ENCODE measurements at regions of chr11 and their contacts with region 1.

Region 1: GRCh38 chr11:9565822-9566560 is 7.5 kb upstream of the WEE1 start:
- DNase-seq: peak; percentile 99
- ATAC-seq: peak; percentile 83
- H3K4me3 ChIP-seq: peak overlapping the region; percentile 48; the same call in 1 of the 2 replicates
- H3K27ac ChIP-seq: peak overlapping the region; percentile 98
- H3K4me1 ChIP-seq: peaks cover 65% of the 10 kb centered on the region
- H3K27me3 ChIP-seq: no peaks in the 10 kb centered on the region
- CTCF ChIP-seq: no peak

Region 2: GRCh38 chr11:9518835-9519410 is 47.1 kb before region 1 on chr11:
- CTCF ChIA-PET with region 1: no interaction called
- POLR2A ChIA-PET with region 1: interaction called, 5 read pairs
- intact Hi-C with region 1: loop called (anchors 1 kb)
- DNase-seq: no peak
- ATAC-seq: no peak
- H3K4me3 ChIP-seq: no peak overlapping the region
- H3K27ac ChIP-seq: no peak overlapping the region
- H3K4me1 ChIP-seq: no peaks in the 10 kb centered on the region
- H3K27me3 ChIP-seq: no peaks in the 10 kb centered on the region
- CTCF ChIP-seq: no peak

Region 3: DNA sequence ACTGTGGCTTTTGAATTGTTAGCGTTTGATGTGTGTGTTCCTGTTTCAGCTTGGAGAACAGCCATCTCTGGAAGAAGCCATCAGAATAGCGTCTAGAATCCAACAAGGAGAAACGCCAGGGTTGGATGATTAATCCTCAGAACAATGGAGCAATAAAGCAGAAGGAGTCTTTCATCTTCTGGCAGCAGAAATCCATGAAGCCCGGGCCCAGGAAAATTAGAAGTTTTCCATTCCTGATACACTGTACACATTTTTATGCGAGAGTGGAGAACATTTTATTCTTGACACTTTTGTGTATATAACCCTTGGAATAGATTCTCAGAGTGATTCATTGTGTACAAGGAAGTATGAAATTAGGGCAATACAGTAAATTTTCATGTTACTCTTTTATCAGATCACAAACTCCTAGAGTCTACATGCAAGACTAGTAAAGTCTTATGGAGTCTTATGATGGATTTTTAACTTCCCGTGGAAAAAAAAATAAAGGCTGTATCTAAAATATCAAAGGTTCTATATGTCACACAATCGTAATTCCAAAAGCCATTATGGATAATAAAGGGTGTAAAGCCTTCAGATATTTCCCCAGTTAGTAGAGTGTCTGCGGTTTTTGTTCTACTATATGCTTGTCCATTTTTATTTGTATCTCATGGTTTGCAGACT is 38.4 kb before region 1 on chr11:
- CTCF ChIA-PET with region 1: no interaction called
- POLR2A ChIA-PET with region 1: interaction called, 5 read pairs
- intact Hi-C with region 1: loop called (anchors 1 kb)
- DNase-seq: peak; percentile 74
- ATAC-seq: peak; percentile 83
- H3K4me3 ChIP-seq: peak overlapping the region; percentile 1; the same call in 1 of the 2 replicates
- H3K27ac ChIP-seq: peak overlapping the region; percentile 79
- H3K4me1 ChIP-seq: peaks cover 36% of the 10 kb centered on the region
- H3K27me3 ChIP-seq: no peaks in the 10 kb centered on the region
- CTCF ChIP-seq: no peak

Region 4: GRCh38 chr11:9626496-9627394 is 60.8 kb after region 1 on chr11:
- CTCF ChIA-PET with region 1: no interaction called
- POLR2A ChIA-PET with region 1: no interaction called
- intact Hi-C with region 1: no loop called
- DNase-seq: no peak
- ATAC-seq: no peak
- H3K4me3 ChIP-seq: no peak overlapping the region
- H3K27ac ChIP-seq: no peak overlapping the region
- H3K4me1 ChIP-seq: no peaks in the 10 kb centered on the region
- H3K27me3 ChIP-seq: no peaks in the 10 kb centered on the region
- CTCF ChIP-seq: no peak